MCF 10A (cell line): ENCODE measurements at regions of chr20 and their contacts with region 1.

Region 1: DNA sequence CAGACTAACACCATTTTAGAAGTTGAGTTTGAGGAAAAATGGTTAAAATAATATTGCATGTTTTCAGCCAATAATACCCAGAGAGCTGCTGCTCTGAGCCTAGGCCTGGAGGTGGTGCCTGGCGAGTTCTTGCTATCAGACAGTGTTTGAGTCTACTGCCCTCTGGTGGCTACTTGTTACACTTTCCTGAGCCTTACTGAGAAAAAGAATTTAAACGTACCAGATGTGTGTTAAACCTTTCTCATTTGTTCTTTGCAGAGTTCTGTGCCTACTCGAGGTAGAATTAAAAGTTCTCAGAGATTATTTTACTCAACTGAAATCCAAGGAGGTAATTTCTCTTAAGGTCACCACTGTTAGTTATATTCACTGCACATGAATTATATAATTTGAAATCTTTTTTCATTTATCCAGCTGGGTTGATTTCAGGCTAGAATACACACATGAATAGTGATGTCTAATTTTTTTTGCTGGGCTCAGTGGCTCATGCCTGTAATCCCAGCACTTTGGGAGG is 38.2 kb downstream of the SHLD1 start:
- DNase-seq: peak; percentile 88
- H3K4me3 Mint-ChIP-seq: no peak overlapping the region
- H3K27ac Mint-ChIP-seq: no peak overlapping the region
- H3K4me1 Mint-ChIP-seq: peaks cover 14% of the 10 kb centered on the region
- H3K27me3 Mint-ChIP-seq: no peaks in the 10 kb centered on the region
- CTCF ChIP-seq: peak; percentile 90

Region 2: GRCh38 chr20:5550733-5551529 is 237.5 kb before region 1 on chr20:
- CTCF ChIA-PET with region 1: interaction called, 45 read pairs
- POLR2A ChIA-PET with region 1: interaction called, 8 read pairs
- intact Hi-C with region 1: no loop called
- DNase-seq: no peak
- H3K4me3 Mint-ChIP-seq: no peak overlapping the region
- H3K27ac Mint-ChIP-seq: no peak overlapping the region
- H3K4me1 Mint-ChIP-seq: peaks cover 6% of the 10 kb centered on the region
- H3K27me3 Mint-ChIP-seq: no peaks in the 10 kb centered on the region
- CTCF ChIP-seq: no peak

Region 3: DNA sequence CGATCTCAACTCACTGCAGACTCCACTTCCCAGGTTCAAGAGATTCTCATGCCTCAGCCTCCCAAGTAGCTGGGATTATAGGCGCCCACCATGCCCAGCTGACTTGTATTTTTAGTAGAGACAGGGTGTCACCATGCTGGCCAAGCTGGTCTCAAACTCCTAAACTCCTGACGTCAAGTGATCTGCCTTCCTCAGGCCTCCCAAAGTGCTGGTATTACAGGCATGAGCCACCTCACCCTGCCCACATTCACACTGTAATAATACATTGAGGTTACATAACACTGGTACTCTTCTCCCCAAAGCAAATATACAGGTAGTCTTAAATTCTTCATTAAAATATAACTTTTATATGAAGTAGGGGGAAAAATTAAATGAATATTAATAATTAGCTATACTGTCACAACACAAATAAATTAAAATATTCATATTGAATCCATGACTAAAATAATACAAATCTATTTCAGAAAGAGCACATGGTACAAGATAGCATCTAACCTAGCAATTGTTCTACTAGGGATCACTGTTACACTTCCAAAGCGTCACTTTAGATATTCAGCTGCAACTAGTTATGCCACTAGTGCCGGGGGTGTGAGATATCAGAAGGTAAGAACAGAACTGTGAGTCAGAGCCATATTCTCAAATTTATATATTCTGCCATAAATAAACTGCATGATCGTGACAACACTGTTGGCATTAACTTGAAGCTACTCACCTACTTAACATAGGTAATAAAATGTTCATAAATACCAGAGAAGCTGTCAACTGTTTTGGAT is 207.3 kb before region 1 on chr20:
- CTCF ChIA-PET with region 1: interaction called, 20 read pairs
- POLR2A ChIA-PET with region 1: interaction called, 4 read pairs
- intact Hi-C with region 1: no loop called
- DNase-seq: no peak
- H3K4me3 Mint-ChIP-seq: no peak overlapping the region
- H3K27ac Mint-ChIP-seq: no peak overlapping the region
- H3K4me1 Mint-ChIP-seq: no peaks in the 10 kb centered on the region
- H3K27me3 Mint-ChIP-seq: no peaks in the 10 kb centered on the region
- CTCF ChIP-seq: no peak

Region 4: DNA sequence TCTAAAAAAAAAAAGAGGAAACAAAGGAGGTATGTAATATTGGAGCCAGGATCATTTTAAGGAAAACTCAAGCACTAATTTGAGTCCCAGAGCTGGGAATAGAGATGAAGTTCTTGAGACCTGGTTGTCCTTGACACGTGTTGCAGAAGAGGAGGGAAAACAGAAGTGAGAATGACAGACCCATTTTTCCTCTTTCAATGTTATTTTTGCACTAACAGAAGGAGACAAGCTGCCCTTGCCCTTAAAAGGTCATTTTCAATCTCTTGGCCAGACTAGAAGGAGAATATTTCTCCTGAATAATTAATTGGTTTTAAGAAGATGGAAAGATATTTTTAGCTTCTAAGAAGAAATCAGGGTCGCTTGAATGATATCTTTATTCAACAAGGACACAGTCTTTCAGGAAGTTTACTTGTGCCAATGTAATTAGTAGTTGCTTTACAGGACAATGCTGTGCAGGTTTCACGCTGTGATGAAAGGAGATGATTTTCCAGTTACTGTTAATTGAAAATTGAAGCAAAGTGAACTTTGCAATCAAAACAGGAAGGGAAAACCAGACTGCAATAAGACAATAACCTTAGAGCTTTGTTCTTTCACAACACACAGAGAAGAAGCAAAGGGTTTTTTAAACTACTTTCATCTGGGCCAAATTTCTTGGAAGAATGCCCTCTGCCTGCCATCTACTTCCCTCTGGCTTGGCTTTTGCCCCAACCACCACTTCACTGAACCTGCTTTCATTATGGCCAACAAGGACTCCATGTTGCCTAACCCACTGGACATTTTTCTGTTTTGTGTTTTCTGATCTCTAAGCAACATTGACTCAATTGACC is 146.1 kb before region 1 on chr20:
- CTCF ChIA-PET with region 1: interaction called, 7 read pairs
- POLR2A ChIA-PET with region 1: interaction called, 15 read pairs
- intact Hi-C with region 1: no loop called
- DNase-seq: peak; percentile 78
- H3K4me3 Mint-ChIP-seq: no peak overlapping the region
- H3K27ac Mint-ChIP-seq: peak overlapping the region; percentile 64
- H3K4me1 Mint-ChIP-seq: peaks cover 12% of the 10 kb centered on the region
- H3K27me3 Mint-ChIP-seq: no peaks in the 10 kb centered on the region
- CTCF ChIP-seq: no peak

Region 5: DNA sequence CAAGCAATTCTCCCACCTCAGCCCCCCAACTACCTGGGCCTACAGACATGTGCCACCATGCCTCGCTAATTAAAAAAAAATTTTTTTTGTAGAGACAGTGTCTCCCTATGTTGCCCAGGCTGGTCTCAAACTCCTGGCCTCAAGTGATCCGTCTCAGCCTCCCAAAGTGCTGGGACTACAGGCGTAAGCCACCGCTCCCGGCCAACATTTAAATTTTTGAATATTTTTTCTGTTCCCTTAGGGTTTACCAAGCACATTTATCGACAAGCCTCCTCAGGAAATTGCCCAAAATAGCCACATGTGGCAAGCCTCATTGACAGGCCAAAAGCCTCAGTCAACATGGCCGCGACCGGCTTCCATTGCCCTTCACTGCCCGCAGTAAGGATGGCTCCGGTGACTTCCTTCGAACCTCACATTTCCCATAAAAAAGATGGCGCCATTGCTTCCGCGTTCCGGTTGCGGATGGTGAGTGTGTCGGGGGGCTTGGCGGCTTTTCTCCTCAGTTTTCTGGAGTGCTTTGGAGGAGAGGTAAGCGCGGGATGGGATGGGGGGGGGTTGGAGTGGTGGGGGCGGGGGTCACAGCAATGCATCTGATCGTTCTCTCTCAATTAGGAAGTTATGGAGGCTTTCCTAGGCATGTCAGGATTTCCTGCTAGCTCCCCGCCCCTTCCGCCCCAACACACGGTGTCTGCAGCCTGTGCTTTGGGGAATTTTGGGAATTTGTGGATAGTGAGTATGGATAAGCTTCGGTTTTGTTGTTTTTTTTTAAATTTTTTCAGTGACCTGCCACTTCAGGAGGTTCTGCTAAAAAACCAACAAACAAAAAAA is 38.3 kb before region 1 on chr20 and contains the start of gene SHLD1:
- CTCF ChIA-PET with region 1: interaction called, 17 read pairs
- POLR2A ChIA-PET with region 1: interaction called, 14 read pairs
- intact Hi-C with region 1: no loop called
- DNase-seq: peak; percentile 85
- H3K4me3 Mint-ChIP-seq: peak within 1 kb of the TSS; percentile 78
- H3K27ac Mint-ChIP-seq: peak within 1 kb of the TSS; percentile 95
- H3K4me1 Mint-ChIP-seq: peaks cover 3% of the 10 kb centered on the region
- H3K27me3 Mint-ChIP-seq: no peaks in the 10 kb centered on the region
- CTCF ChIP-seq: no peak
- total RNA-seq, gene SHLD1: 2.3 and 3.3 TPM in 2 replicates

Region 6: GRCh38 chr20:5996765-5997164 is 208.3 kb after region 1 on chr20:
- CTCF ChIA-PET with region 1: no interaction called
- POLR2A ChIA-PET with region 1: no interaction called
- intact Hi-C with region 1: no loop called
- DNase-seq: no peak
- H3K4me3 Mint-ChIP-seq: no peak overlapping the region
- H3K27ac Mint-ChIP-seq: no peak overlapping the region
- H3K4me1 Mint-ChIP-seq: no peaks in the 10 kb centered on the region
- H3K27me3 Mint-ChIP-seq: no peaks in the 10 kb centered on the region
- CTCF ChIP-seq: no peak